ENCODE measurements at regions of chr3 and their contacts with region 1.

Region 1: DNA sequence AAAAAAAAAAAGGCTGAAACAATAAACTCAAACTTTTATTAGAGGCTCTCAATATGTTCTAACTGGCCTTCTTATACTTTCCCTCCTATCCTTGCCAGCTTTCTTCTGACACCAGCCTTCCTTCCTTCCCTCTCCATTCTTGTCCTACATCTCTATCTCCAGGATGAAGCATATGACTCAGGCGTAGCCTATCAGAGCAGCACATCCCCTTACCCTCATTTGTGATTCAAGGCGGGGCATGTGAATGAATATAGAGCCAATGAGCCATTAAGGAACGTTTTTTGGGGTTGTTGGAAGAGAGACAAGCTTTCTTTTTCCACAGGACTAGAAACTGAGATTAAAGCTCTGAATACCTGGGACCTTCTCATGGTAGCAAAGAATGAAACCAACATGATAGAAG is 25.1 kb upstream of the KCNMB3 start:
- DNase-seq: no peak
- ATAC-seq: no peak
- H3K4me3 ChIP-seq: no peak overlapping the region
- H3K27ac ChIP-seq: no peak overlapping the region
- H3K4me1 ChIP-seq: no peaks in the 10 kb centered on the region
- H3K27me3 ChIP-seq: peaks cover 2% of the 10 kb centered on the region; the same call in 1 of the 2 replicates
- CTCF ChIP-seq: no peak

Region 2: GRCh38 chr3:179100652-179101051 is 175.3 kb before region 1 on chr3:
- CTCF ChIA-PET with region 1: no interaction called
- POLR2A ChIA-PET with region 1: interaction called, 12 read pairs
- in situ Hi-C with region 1: no loop called
- intact Hi-C with region 1: no loop called
- DNase-seq: no peak
- ATAC-seq: no peak
- H3K4me3 ChIP-seq: no peak overlapping the region
- H3K27ac ChIP-seq: no peak overlapping the region
- H3K4me1 ChIP-seq: no peaks in the 10 kb centered on the region
- H3K27me3 ChIP-seq: no peaks in the 10 kb centered on the region; the same call in 1 of the 2 replicates
- CTCF ChIP-seq: no peak